Common myeloid progenitor, CD34-positive (primary cell): ENCODE measurements at regions of chr14 and their contacts with region 1.

Region 1: DNA sequence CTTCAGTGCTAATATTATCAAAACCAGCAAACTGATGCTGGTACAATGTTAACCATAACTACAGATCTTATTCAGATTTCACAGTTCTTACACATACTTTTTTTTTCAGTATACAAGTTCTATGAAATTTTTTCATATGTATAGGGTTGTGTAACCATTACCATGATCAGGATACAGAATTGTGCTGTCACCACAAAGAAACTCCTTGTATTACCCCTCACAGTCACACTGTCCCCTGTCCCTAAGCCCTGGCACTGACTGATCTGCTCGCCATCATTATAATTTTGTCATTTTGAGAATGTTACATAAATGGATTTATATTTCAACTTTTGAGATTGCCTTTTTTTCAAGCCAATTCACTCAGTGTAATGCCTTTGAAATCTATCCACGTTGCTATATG is 21.3 kb upstream of the NFKBIA start:
- DNase-seq: no peak
- H3K4me3 ChIP-seq: no peak overlapping the region
- H3K27ac ChIP-seq: no peak overlapping the region
- H3K4me1 ChIP-seq: no peaks in the 10 kb centered on the region
- H3K27me3 ChIP-seq: no peaks in the 10 kb centered on the region

Region 2: GRCh38 chr14:35438910-35439713 is 13.3 kb after region 1 on chr14:
- CTCF ChIA-PET with region 1: interaction called, 14 read pairs
- POLR2A ChIA-PET with region 1: no interaction called
- DNase-seq: peak in 2 of 3 donors; percentile 5 to 8
- H3K4me3 ChIP-seq: no peak overlapping the region
- H3K27ac ChIP-seq: no peak overlapping the region
- H3K4me1 ChIP-seq: no peaks in the 10 kb centered on the region
- H3K27me3 ChIP-seq: no peaks in the 10 kb centered on the region